ENCODE measurements at regions of chr3 and their contacts with region 1.

Region 1: DNA sequence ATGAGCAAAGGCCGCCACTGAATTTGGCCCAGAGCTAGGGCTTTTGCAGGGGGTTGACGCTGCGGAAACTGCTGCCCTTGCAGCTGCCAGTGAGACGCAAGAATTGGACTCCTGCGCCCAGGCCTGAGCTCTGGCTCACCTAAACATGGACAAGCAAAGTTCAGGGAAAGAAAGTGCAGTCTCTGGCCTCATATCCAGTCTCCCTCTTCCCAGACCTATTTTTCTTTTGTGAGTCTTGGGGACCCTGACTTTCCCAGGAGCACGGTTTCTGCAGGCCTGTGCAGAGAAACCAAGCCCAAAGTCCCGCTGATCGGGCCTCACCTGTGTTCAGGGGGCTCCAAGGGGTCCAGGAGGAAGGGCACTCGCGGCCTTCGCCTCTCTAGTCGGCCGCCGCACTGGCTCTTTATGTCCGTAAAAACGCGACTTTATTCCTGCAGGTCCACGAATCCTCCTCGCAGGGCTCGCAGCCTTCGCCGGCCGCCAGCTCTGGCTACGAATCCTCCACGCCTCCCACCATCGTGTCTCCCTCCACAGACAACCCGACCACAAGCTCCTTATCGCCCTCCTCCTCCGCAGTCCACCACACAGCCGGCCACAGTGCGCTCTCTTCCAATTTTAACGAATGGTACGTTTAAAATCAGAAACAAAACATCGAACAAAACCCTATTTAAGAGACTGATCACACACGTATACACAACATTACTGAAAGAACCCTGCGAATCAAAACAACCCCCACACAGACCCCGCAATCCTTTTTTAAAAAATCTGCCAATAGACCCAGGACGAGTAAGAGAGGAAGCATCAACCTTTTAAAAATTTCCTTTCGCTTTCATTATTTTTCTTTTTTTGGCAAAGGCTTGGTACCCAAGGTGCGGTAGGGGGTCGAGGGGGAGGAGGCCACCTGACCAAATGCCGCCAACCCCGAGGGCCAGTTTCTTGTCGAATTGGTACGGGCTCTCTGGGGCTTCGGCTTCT is 4.0 kb downstream of the ZIC1 start:
- DNase-seq: no peak
- H3K4me3 Mint-ChIP-seq: peak overlapping the region; percentile 65
- H3K27ac Mint-ChIP-seq: peak overlapping the region; percentile 79
- H3K4me1 Mint-ChIP-seq: peaks cover 18% of the 10 kb centered on the region
- H3K27me3 Mint-ChIP-seq: peaks cover 67% of the 10 kb centered on the region

Region 2: GRCh38 chr3:147397155-147397874 is 15.9 kb before region 1 on chr3:
- intact Hi-C with region 1: loop called (anchors 2 kb)
- DNase-seq: no peak
- H3K4me3 Mint-ChIP-seq: no peak overlapping the region
- H3K27ac Mint-ChIP-seq: peak overlapping the region; percentile 37
- H3K4me1 Mint-ChIP-seq: peaks cover 4% of the 10 kb centered on the region
- H3K27me3 Mint-ChIP-seq: peaks cover 66% of the 10 kb centered on the region